ENCODE measurements at regions of chr4 and their contacts with region 1.

Region 1: GRCh38 chr4:15001869-15002658 is at the start of gene CPEB2:
- DNase-seq: peak; percentile 68 to 95
- H3K4me3 ChIP-seq: peak within 1 kb of the TSS; percentile 90
- H3K27ac ChIP-seq: peak within 1 kb of the TSS; percentile 82
- H3K4me1 ChIP-seq: peaks cover 22% of the 10 kb centered on the region; the same call in 1 of the 2 replicates
- H3K27me3 ChIP-seq: no peaks in the 10 kb centered on the region
- CTCF ChIP-seq: no peak
- total RNA-seq, gene CPEB2: 9.3 and 9.4 TPM in 2 replicates

Region 2: GRCh38 chr4:13907255-13907751 is 1094.8 kb before region 1 on chr4:
- CTCF ChIA-PET with region 1: no interaction called
- POLR2A ChIA-PET with region 1: interaction called, 8 read pairs
- intact Hi-C with region 1: loop called (anchors 1 kb)
- DNase-seq: peak; percentile 63 to 99
- H3K4me3 ChIP-seq: no peak overlapping the region
- H3K27ac ChIP-seq: peak overlapping the region; percentile 94
- H3K4me1 ChIP-seq: peaks cover 25% of the 10 kb centered on the region
- H3K27me3 ChIP-seq: no peaks in the 10 kb centered on the region
- CTCF ChIP-seq: peak; percentile 61

Region 3: DNA sequence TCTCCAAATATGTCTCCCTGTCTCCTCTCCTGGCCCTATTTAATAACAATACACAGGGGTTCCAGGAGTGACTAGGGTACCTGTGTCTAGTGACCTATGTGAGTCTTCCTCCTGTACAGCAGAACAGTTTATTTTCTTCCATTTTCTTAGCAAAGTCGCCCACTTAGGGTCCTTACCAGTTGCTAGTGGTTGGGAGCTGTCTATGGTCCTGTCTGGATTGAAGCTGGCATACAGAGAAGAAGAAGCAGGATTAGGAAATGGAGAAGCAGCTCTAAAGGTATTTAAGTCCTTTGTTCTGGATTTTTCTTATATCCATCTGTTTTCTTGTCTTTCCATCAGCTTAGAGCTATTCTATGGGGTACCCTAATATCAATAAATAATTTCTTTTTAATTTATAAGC is 586.9 kb before region 1 on chr4:
- CTCF ChIA-PET with region 1: no interaction called
- POLR2A ChIA-PET with region 1: no interaction called
- intact Hi-C with region 1: no loop called
- DNase-seq: no peak
- H3K4me3 ChIP-seq: no peak overlapping the region
- H3K27ac ChIP-seq: no peak overlapping the region
- H3K4me1 ChIP-seq: no peaks in the 10 kb centered on the region
- H3K27me3 ChIP-seq: no peaks in the 10 kb centered on the region
- CTCF ChIP-seq: no peak

Region 4: GRCh38 chr4:14726441-14727405 is 275.3 kb before region 1 on chr4:
- CTCF ChIA-PET with region 1: no interaction called
- POLR2A ChIA-PET with region 1: no interaction called
- intact Hi-C with region 1: loop called (anchors 1 kb)
- DNase-seq: peak; percentile 70 to 89
- H3K4me3 ChIP-seq: peak overlapping the region; percentile 4; the same call in 1 of the 2 replicates
- H3K27ac ChIP-seq: peak overlapping the region; percentile 61
- H3K4me1 ChIP-seq: peaks cover 18% of the 10 kb centered on the region
- H3K27me3 ChIP-seq: no peaks in the 10 kb centered on the region
- CTCF ChIP-seq: no peak

Region 5: GRCh38 chr4:14871676-14872430 is 130.2 kb before region 1 on chr4:
- CTCF ChIA-PET with region 1: interaction called, 12 read pairs
- POLR2A ChIA-PET with region 1: no interaction called
- intact Hi-C with region 1: no loop called
- DNase-seq: peak; percentile 51 to 71
- H3K4me3 ChIP-seq: no peak overlapping the region
- H3K27ac ChIP-seq: no peak overlapping the region
- H3K4me1 ChIP-seq: no peaks in the 10 kb centered on the region
- H3K27me3 ChIP-seq: no peaks in the 10 kb centered on the region
- CTCF ChIP-seq: peak; percentile 67

Region 6: DNA sequence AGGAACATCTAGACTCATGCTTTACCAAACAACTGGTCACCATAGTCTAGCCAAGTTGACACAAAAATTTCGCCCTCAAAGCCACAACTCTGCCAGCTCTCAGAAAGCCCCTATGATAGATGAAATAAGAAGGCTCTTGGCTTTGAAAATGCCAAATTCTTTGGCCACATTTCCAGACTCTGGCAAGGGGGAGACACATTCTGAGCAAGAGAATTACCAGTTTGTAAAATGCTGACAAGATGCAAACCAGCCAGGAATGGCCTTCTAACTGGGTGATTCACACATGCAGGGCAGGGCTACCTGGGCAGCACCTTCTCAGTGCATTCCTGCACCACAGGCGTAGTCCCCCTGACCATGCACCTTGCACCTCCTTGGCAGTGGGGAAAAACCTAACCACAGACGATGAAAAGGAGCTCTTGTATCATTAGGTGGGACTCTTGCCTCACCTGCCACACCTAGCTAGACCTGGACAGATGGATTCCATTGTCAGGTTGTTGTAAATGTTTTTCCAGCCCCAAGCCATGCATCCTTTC is 77.2 kb before region 1 on chr4:
- CTCF ChIA-PET with region 1: interaction called, 3 read pairs
- POLR2A ChIA-PET with region 1: interaction called, 3 read pairs
- intact Hi-C with region 1: loop called (anchors 2 kb)
- DNase-seq: peak; percentile 84 to 90
- H3K4me3 ChIP-seq: no peak overlapping the region
- H3K27ac ChIP-seq: peak overlapping the region; percentile 75
- H3K4me1 ChIP-seq: peaks cover 18% of the 10 kb centered on the region
- H3K27me3 ChIP-seq: no peaks in the 10 kb centered on the region
- CTCF ChIP-seq: no peak

Region 7: DNA sequence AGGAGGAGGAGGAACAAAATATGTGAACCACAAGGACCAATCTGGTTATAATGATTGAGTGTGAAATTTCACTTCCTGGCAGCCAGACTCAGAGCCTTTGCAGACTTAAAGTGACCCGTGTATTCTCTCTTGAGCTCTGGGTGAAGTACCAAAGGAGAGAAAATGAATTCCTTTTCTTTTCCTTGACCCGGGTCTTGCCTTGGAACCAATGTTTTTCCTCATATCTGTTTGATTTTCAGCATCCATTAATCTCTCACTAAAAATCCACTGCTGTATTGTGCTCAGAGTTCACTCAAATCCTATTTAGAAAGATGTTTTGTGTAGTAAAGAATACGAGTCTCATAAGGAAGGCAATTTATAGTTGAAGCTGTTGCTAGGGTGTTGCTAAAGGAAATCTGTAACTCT is 347.5 kb after region 1 on chr4:
- CTCF ChIA-PET with region 1: no interaction called
- POLR2A ChIA-PET with region 1: no interaction called
- intact Hi-C with region 1: no loop called
- DNase-seq: no peak
- H3K4me3 ChIP-seq: no peak overlapping the region
- H3K27ac ChIP-seq: no peak overlapping the region
- H3K4me1 ChIP-seq: no peaks in the 10 kb centered on the region
- H3K27me3 ChIP-seq: 0 out of 2 replicates have a peak, but pooled peaks cover 6% of the 10 kb centered on the region
- CTCF ChIP-seq: no peak

Region 8: DNA sequence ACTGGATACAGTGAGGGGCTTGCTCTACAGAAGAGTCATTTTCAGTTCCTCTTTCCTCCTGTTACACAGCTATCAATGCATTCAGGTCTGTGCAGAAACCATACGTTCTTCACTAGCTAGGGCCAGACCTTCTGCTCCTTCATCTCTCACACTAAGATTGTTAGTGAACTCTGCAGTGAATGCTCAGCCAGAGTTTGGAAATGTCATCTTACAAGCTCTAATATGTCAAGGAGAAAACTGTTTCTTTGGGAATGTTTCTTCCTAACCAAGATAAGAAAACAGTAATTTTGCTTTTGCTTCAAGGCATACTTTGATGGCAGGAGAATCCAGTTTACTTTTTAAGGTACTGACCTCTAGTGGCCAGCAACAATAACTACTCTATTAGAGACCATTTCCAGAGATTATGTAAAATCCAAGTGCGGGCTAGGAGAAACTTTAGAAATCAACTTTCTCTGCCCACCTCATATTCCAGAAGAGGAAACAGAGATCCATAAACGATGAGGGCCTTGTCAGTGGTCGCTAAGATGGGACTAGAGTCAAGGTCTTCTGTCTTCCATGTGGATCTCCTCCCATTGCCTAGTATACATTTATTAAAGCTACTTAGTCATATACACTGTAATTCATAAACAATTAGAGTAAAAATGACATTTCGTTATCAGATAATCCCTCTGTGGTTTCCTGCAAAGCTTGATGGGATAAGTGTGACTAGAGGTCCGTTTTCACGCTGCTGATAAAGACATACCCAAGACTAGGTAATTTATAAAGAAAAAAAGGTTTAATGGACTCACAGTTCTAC is 455.5 kb after region 1 on chr4:
- CTCF ChIA-PET with region 1: no interaction called
- POLR2A ChIA-PET with region 1: no interaction called
- intact Hi-C with region 1: loop called (anchors 10 kb)
- DNase-seq: no peak
- H3K4me3 ChIP-seq: no peak overlapping the region
- H3K27ac ChIP-seq: no peak overlapping the region
- H3K4me1 ChIP-seq: no peaks in the 10 kb centered on the region
- H3K27me3 ChIP-seq: no peaks in the 10 kb centered on the region
- CTCF ChIP-seq: peak; percentile 78